ENCODE measurements at regions of chrX and their contacts with region 1.

Region 1: GRCh38 chrX:81195712-81196111 is 6.0 kb downstream of the HMGN5 start:
- DNase-seq: peak in 1 of 2 donors; percentile 27
- ATAC-seq: peak in 4 of 8 donors; percentile 29 to 57 (median 42)
- H3K4me3 ChIP-seq: no peak overlapping the region
- H3K27ac ChIP-seq: no peak overlapping the region
- H3K4me1 ChIP-seq: peaks cover 0 to 3% (median 0%) of the 10 kb centered on the region in 9 donors
- H3K27me3 ChIP-seq: no peaks in the 10 kb centered on the region
- CTCF ChIP-seq: peak; percentile 25 to 72 (median 60)

Region 2: GRCh38 chrX:80876877-80877276 is 318.8 kb before region 1 on chrX:
- intact Hi-C with region 1: loop called in 1 of 10 experiments (anchors 10 kb)
- DNase-seq: no peak
- ATAC-seq: no peak
- H3K4me3 ChIP-seq: no peak overlapping the region
- H3K27ac ChIP-seq: no peak overlapping the region
- H3K4me1 ChIP-seq: no peaks in the 10 kb centered on the region
- H3K27me3 ChIP-seq: peaks cover 0 to 15% (median 0%) of the 10 kb centered on the region in 7 donors
- CTCF ChIP-seq: peak in 7 of 9 donors; percentile 41 to 62 (median 54)